ENCODE measurements at regions of chr10 and their contacts with region 1.

Region 1: DNA sequence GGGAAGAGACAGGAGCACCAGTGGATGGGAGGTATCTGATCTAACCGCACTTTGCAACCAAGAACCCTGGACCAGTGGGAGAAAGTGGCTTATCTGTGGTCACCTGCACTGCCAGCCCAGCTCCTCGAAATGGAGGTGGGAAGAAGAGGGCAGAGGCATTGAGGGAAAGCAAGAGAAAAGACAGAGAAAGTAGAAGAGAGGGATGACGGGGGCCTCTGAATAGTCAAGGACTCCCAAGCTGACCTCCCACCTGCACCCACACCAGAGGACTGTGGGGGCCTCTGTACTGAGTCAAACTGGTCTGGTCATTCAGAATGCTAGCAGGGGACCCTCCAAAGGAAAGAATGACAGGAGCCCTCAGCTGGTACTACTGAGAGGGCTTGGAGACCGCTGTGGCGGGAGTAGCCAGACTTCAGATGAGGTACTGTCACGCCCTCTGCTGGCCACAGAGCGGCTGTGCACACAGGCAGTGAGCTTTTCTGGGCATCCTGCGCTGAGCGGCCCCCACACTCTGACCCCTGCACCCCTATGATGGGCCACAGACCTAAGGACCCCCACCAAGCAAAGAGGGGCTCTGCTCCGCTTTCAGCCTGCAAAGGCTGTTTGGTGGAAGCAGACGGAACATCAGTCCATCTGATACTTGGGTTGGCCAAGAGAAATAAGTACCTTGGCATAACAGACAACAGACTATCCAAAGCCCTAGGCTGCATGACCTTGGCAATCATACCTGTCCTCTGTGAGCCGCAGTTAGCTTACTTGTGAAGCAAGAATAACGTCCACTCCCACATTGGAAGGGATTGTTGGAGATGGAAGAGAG is 112.9 kb downstream of the COL13A1 start:
- DNase-seq: peak; percentile 87
- H3K4me3 ChIP-seq: no peak overlapping the region; a peak in 1 of 4 replicates
- H3K27ac ChIP-seq: no peak overlapping the region
- H3K4me1 ChIP-seq: peaks cover 0 to 5% of the 10 kb centered on the region in 2 experiments; a peak in 1 of 4 replicates
- H3K27me3 ChIP-seq: no peaks in the 10 kb centered on the region
- CTCF ChIP-seq: peak; percentile 90
- EP300 ChIP-seq: no peak
- RAD21 ChIP-seq: peak; percentile 94

Region 2: DNA sequence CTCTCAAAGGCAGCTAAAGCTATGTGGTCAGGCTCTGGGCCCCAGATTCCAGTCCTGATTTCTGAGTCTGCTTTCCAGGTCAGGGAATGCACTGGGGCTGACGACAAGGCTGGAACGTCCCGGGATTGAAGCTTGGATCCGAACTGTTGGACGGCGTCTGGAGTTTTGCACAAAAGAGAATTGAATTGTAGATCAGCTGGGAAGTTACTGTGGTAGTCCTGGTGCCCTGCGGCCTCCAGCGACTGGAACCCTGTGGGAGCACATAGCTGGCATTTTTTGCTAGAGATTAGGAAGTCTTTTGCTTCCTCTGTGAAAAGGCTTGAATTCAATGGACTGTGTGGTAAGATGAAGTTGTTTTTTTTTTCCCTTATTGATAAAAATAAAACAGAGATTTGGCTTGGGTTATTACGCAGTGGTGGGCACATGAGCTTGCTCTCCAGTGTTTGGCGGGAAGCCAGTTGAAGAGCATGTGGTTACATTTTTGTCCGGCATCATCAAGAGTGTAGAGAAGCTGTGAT is 636.1 kb before region 1 on chr10 and contains the start of gene HK1:
- CTCF ChIA-PET with region 1: no interaction called
- POLR2A ChIA-PET with region 1: no interaction called
- DNase-seq: no peak
- H3K4me3 ChIP-seq: no peak within 1 kb of the TSS
- H3K27ac ChIP-seq: no peak within 1 kb of the TSS
- H3K4me1 ChIP-seq: no peaks in the 10 kb centered on the region
- H3K27me3 ChIP-seq: no peaks in the 10 kb centered on the region
- CTCF ChIP-seq: no peak
- EP300 ChIP-seq: no peak
- RAD21 ChIP-seq: no peak
- polyA plus RNA-seq, gene HK1: 32.0 and 38.7 TPM in 2 replicates

Region 3: DNA sequence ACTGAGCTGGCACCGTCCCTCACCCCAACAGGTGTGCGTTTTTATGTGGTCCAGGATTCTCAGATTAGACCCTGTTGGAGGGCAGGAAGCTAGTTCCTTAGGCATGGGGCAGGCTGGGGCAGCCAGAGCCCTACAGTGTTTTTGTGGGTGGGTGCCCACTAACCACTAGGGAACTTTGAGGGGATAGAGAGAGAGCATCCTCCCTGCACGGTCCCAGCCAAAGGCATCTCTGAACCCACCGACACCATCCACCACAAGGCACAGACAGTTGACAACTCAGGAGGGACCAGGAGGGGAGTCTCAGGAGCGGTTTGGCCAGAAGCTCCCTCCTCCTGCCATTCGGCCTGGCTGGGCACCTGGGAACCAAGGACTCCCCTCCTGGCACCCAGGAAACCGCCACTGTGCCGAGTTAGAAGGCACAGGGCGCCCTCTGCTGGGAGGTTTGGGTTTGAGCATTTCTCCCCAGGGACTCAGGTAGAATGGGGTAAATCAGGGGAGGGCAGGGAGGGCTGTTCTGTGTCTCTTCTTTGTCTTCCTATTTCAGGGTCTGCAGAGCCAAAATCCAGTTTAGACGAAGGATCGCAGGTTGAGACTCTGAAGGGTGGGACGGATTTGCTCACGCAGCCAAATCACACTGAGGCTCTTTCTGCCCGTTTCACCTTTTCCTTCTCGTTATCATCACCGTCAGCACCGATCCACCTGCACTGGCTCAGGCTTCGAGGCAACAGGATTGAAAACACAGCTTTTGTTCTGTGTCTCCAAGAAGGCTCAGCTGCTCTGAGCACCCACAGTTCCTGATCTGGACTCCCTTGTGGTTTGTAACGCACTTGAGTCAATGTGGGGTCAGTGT is 197.7 kb before region 1 on chr10:
- CTCF ChIA-PET with region 1: interaction called, 37 read pairs
- POLR2A ChIA-PET with region 1: no interaction called
- DNase-seq: peak; percentile 84
- H3K4me3 ChIP-seq: no peak overlapping the region; a peak in 1 of 4 replicates
- H3K27ac ChIP-seq: no peak overlapping the region
- H3K4me1 ChIP-seq: no peaks in the 10 kb centered on the region; a peak in 1 of 4 replicates
- H3K27me3 ChIP-seq: peaks cover 7% of the 10 kb centered on the region; the same call in 1 of the 2 replicates
- CTCF ChIP-seq: peak; percentile 77
- EP300 ChIP-seq: no peak
- RAD21 ChIP-seq: peak; percentile 93

Region 4: DNA sequence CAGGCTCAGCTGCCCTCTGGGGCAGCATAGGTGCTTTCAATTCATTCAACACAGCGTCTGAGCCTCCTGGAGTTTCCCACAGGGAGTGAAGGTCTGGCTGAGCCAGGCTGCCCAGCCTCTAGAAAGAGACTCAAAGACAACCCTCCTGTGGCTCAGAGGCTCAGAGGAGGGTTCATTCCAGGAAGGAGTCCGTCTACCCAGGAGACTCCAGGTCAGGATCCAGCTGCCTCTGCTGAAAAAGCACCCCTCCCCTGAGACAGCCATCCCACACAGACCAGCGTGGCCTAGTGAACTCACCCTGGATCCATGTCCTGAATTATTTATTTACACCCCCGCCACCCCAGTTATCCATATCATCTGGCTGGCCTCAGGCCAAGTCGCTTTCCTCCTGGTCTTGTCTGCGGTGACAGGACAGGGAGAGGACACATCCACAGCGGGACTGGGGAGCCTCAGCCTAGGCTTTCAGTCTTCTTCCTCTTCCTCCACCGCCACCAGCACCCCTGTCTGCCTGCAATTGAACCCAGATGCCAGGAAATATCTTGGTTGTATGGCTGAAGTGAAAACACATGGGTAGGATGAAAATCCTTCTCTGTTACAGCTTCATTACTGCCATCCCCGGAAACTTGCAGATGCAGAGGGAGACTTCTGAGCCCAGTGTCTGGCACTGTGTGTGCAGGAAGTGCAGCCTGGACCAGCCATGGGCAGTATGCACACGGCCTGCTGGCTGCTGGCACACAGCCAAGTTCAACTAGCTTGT is 156.9 kb before region 1 on chr10:
- CTCF ChIA-PET with region 1: interaction called, 17 read pairs
- POLR2A ChIA-PET with region 1: no interaction called
- DNase-seq: peak; percentile 82
- H3K4me3 ChIP-seq: peak overlapping the region in 1 of 2 experiments; percentile 7; a peak in 1 of 4 replicates
- H3K27ac ChIP-seq: peak overlapping the region; percentile 71 to 99
- H3K4me1 ChIP-seq: peaks cover 14 to 46% of the 10 kb centered on the region in 2 experiments
- H3K27me3 ChIP-seq: no peaks in the 10 kb centered on the region
- CTCF ChIP-seq: no peak
- EP300 ChIP-seq: no peak; a peak in 1 of 4 replicates
- RAD21 ChIP-seq: peak; percentile 22; the same call in 1 of the 2 replicates

Region 5: DNA sequence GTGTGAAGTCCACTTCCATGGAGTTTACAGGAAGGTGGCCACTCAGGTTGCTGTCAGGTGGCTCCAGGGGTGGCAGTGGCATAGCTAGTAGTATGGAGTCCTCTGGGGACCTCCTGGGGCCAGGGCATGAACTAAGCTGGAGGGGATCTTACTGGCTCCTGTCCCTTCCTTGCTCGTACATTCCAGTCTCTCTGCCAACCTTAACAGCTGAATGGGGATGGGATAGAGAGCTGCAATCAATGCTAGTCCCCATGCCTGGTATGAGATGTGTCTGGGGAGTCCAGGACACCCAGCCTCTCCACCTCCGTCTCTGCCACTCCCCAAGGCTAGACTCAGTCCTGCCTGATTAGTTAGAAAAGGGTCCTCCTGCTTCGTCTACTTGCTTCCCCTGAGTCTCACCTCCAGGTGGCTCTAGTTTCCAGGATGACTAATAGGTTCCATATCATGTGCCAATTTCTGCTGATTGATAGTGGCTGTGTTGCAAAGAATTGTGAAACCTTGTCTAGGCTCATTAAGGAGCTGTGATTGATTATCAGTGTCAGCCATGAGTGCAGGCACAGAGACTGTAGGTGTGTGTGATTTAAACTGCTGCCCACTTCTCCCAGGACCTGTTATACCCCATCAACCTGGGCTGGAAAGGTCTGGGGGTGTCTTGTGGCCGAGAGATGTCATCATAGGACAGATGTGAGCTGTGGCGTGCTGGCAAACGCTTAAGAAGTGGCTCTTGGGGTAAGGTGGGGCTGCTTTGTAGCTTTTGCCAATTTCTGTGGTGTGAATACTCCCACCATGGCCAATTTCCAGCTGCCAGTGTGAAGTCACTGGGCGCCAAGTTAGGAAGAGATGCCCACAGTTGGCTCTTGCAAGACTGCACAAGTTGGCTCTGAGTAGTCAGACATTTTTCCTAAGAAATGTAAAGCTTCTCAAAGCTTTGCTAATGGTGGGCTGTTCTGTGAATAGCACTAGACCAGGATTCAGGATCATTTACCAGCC is 53.1 kb before region 1 on chr10:
- CTCF ChIA-PET with region 1: interaction called, 42 read pairs
- POLR2A ChIA-PET with region 1: no interaction called
- DNase-seq: no peak
- H3K4me3 ChIP-seq: no peak overlapping the region
- H3K27ac ChIP-seq: peak overlapping the region in 1 of 2 experiments; percentile 28; a peak in 2 of 4 replicates
- H3K4me1 ChIP-seq: peaks cover 22 to 47% of the 10 kb centered on the region in 2 experiments
- H3K27me3 ChIP-seq: no peaks in the 10 kb centered on the region
- CTCF ChIP-seq: peak; percentile 46
- EP300 ChIP-seq: peak; percentile 80
- RAD21 ChIP-seq: peak; percentile 30; the same call in 1 of the 2 replicates

Region 6: GRCh38 chr10:69890065-69890847 is 24.4 kb before region 1 on chr10:
- CTCF ChIA-PET with region 1: interaction called, 120 read pairs
- POLR2A ChIA-PET with region 1: no interaction called
- DNase-seq: no peak
- H3K4me3 ChIP-seq: no peak overlapping the region
- H3K27ac ChIP-seq: no peak overlapping the region
- H3K4me1 ChIP-seq: peaks cover 0 to 3% of the 10 kb centered on the region in 2 experiments; a peak in 1 of 4 replicates
- H3K27me3 ChIP-seq: no peaks in the 10 kb centered on the region
- CTCF ChIP-seq: no peak
- EP300 ChIP-seq: no peak
- RAD21 ChIP-seq: no peak

Region 7: GRCh38 chr10:69948261-69948660 is 33.7 kb after region 1 on chr10:
- CTCF ChIA-PET with region 1: interaction called, 18 read pairs
- POLR2A ChIA-PET with region 1: no interaction called
- DNase-seq: no peak
- H3K4me3 ChIP-seq: no peak overlapping the region
- H3K27ac ChIP-seq: no peak overlapping the region
- H3K4me1 ChIP-seq: no peaks in the 10 kb centered on the region; a peak in 1 of 4 replicates
- H3K27me3 ChIP-seq: no peaks in the 10 kb centered on the region
- CTCF ChIP-seq: no peak
- EP300 ChIP-seq: no peak
- RAD21 ChIP-seq: no peak

Region 8: GRCh38 chr10:70132098-70133029 is 217.8 kb after region 1 on chr10 and contains the start of gene AIFM2:
- CTCF ChIA-PET with region 1: no interaction called
- POLR2A ChIA-PET with region 1: no interaction called
- DNase-seq: peak; percentile 87
- H3K4me3 ChIP-seq: peak within 1 kb of the TSS; percentile 45 to 58
- H3K27ac ChIP-seq: 0 out of 4 replicates have a peak within 1 kb of the TSS, but pooled peaks of 1 of the 2 experiments have one; percentile 11
- H3K4me1 ChIP-seq: peaks cover 0 to 3% of the 10 kb centered on the region in 2 experiments; a peak in 1 of 4 replicates
- H3K27me3 ChIP-seq: no peaks in the 10 kb centered on the region
- CTCF ChIP-seq: no peak
- EP300 ChIP-seq: no peak
- RAD21 ChIP-seq: no peak
- polyA plus RNA-seq, gene AIFM2: 9.4 and 9.5 TPM in 2 replicates

Region 9: DNA sequence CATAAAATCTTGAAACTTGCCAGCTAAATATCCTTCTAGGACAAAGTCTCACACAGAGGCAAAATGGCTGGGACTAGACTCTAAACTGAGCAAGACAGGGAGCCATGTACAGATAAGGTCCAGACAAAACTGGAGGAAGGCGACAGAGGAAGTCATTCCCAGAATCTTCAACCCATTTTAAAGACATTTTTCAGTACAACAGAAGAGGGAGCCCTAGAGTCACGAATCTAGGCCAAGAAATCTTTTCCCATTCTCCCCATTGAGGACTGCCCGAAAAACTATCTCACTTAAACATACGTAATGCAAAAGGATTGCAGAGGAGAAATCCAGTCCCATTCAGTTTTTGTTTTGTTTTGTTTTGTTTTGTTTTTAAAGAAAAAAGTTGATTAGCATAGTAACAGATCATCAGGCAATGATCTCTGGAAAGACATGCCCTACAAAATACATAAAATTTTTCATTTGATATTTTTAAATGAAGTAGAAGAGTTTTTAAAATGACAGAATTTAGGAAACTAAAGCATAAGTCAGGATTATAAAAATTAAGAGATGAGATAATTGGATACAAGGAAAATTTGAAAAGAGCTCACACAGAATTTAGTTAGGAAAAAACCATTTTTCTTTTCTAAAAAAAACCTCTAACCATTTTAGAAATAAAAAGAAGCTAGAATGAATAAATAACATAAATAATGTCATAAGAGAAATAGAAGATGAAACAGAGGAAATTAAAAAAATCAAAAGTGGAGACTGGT is 704.8 kb after region 1 on chr10:
- CTCF ChIA-PET with region 1: no interaction called
- POLR2A ChIA-PET with region 1: no interaction called
- DNase-seq: no peak
- H3K4me3 ChIP-seq: no peak overlapping the region
- H3K27ac ChIP-seq: no peak overlapping the region
- H3K4me1 ChIP-seq: no peaks in the 10 kb centered on the region
- H3K27me3 ChIP-seq: no peaks in the 10 kb centered on the region
- CTCF ChIP-seq: peak; percentile 56
- EP300 ChIP-seq: no peak
- RAD21 ChIP-seq: peak; percentile 68